Ascending aorta (tissue), 2 donors: ENCODE measurements at regions of chr1 and their contacts with region 1.

Region 1: DNA sequence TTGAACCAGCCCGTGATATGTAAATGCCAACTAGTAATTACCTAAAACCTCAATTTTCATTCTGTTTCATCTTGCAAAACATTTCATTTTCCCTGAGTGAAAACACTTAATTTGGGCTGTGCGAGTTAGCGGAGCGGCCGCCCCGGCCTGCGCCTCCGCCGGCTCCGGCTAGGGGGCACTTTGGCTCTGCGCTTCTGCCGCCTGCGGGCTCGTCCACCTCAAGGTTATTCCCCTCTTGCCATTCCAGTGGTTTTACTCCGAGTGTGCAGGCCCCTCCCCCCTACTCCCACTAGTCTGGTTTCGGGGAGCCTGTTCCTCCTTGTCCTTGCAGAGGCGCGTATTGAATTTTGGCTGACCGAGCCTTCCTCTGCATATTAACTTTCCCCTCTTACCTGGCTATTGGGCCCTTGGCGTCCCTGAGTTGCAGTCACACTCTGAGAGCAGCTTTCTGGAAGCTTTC is 55.6 kb downstream of the PEX14 start:
- DNase-seq: peak in 1 of 2 donors; percentile 66
- H3K4me3 ChIP-seq: peak overlapping the region in 1 of 2 donors; percentile 33
- H3K27ac ChIP-seq: peak overlapping the region; percentile 31 to 74
- H3K4me1 ChIP-seq: peaks cover 10 to 26% of the 10 kb centered on the region in 2 donors
- H3K27me3 ChIP-seq: no peaks in the 10 kb centered on the region
- CTCF ChIP-seq: peak; percentile 51 to 67 (median 60)

Region 2: GRCh38 chr1:10472220-10473144 is 57.8 kb before region 1 on chr1 and contains the start of gene DFFA:
- intact Hi-C with region 1: no loop called
- DNase-seq: peak; percentile 74 to 97
- H3K4me3 ChIP-seq: peak within 1 kb of the TSS; percentile 69 to 76
- H3K27ac ChIP-seq: peak within 1 kb of the TSS; percentile 33 to 62
- H3K4me1 ChIP-seq: peaks cover 11 to 22% of the 10 kb centered on the region in 2 donors
- H3K27me3 ChIP-seq: no peaks in the 10 kb centered on the region
- CTCF ChIP-seq: no peak
- total RNA-seq, gene DFFA: 11.8 TPM

Region 3: DNA sequence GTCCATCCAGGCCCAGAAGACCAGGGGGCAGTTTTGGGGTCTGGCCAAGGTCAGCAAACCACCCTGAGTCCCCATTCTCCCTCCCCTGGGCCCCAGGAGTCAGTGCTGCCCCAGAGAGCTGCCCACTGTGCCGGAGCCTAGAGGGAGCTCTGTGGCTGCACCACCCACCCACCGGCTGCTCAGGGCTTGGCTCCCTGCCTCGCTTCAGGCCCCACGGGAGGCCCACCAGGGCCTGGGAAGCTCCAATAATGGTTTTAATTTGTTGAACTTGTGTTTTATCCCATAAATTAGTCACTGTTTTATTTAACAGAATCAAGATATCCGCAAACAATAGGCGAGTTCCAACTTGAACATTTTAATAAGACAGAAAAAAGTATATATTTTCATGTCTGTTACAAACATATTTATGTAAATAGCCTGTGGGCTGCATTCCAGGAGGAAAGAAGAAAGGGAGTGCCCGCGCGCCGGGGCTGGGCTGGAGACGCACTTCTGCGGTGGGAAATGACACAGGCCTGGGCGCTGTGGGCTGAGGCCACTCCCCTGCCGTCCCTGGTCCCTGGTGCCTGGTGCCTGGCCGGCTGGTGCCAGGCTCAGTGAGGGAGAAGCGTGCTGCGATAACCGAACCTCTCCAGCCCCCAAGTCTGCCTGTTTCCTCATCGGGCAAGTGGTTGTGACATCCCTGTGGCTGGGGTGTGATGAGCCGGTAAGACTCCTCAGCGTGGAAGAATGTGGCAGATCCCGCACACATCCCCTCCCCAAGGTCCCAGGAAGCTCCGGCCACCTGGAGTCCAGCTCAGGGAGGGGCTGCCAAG is 105.0 kb after region 1 on chr1:
- intact Hi-C with region 1: loop called (anchors 2 kb)
- DNase-seq: peak in 1 of 2 donors; percentile 83
- H3K4me3 ChIP-seq: peak overlapping the region in 1 of 2 donors; percentile 18
- H3K27ac ChIP-seq: peak overlapping the region; percentile 97 to 99
- H3K4me1 ChIP-seq: peaks cover 35 to 65% of the 10 kb centered on the region in 2 donors
- H3K27me3 ChIP-seq: no peaks in the 10 kb centered on the region
- CTCF ChIP-seq: no peak

Region 4: GRCh38 chr1:10814954-10815857 is 284.9 kb after region 1 on chr1:
- intact Hi-C with region 1: no loop called
- DNase-seq: no peak
- H3K4me3 ChIP-seq: no peak overlapping the region
- H3K27ac ChIP-seq: no peak overlapping the region
- H3K4me1 ChIP-seq: no peaks in the 10 kb centered on the region
- H3K27me3 ChIP-seq: peaks cover 6% of the 10 kb centered on the region
- CTCF ChIP-seq: no peak

Region 5: DNA sequence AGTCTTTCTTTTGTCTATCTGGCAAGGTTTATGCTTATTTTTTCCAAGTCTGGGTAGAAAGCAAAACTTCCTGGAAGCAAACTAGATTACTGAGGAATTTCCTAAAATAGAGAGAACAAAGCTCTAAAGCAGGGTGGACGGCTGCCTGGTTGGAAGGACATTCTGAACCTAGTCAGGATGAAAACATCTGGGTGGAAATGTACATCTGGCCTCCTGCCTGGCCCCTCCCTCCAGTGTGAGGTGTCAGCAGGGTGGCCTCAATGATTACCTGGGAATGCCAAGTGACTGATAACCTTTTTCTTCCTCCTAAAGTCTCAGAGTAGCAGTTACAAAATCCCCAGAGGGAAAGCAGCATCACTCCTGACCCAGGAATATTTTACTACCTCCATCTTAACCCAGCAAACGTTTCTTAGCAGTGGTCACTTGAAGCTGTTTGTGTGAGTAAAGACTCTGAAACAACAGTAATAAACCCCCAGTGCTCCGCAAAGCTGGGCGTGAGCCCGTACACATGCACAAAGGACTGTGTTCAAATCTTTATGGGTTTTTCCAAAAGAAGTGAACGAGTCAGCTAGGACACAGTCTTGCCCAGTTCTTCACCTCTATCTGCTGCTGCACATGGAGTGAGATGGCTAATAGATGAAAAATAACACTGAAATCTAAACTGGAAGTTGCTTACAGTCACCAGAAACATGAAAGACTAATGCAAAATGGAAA is 677.7 kb after region 1 on chr1:
- intact Hi-C with region 1: loop called (anchors 5 kb)
- DNase-seq: peak; percentile 16 to 74
- H3K4me3 ChIP-seq: no peak overlapping the region
- H3K27ac ChIP-seq: peak overlapping the region; percentile 57 to 58
- H3K4me1 ChIP-seq: peaks cover 0 to 3% of the 10 kb centered on the region in 2 donors
- H3K27me3 ChIP-seq: no peaks in the 10 kb centered on the region
- CTCF ChIP-seq: no peak